Posterior vena cava (tissue), 2 donors: ENCODE measurements at regions of chrX and their contacts with region 1.

Region 1: DNA sequence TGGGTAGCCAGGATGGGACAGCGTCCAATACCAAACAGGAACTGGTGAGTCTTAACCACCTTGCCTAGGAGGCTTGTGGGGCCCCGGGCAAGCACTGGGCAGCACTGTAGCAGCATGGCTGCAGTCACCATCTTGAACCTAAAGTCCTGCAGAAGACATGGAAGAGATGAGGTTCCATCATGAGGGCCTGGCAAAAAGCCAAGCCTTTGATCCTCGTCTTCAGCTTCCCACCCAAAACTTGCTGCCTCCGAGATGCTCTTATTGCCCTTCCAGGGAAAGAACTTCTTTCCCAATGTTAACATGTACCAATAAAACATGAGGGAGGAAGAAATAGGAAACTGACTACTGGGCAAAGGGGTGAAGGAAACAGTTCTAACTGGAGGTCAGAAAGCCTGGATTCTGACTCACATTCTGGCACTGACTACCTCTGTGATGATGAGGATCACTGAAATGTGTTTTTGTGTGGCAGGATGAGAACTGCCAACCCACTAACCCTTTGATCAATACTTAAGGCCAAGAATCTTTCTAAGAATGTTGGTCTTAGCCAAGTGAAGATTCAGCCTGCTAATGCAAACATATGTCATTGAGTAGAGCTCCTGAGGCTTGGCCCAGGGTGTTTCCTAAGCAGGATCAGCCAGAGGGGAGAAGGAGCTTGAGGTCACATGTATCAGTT is 4.8 kb downstream of the ALAS2 start:
- DNase-seq: no peak

Region 2: GRCh38 chrX:53095796-53096195 is 1930.2 kb before region 1 on chrX:
- intact Hi-C with region 1: loop called in 1 of 2 experiments (anchors 5 kb)
- DNase-seq: no peak

Region 3: DNA sequence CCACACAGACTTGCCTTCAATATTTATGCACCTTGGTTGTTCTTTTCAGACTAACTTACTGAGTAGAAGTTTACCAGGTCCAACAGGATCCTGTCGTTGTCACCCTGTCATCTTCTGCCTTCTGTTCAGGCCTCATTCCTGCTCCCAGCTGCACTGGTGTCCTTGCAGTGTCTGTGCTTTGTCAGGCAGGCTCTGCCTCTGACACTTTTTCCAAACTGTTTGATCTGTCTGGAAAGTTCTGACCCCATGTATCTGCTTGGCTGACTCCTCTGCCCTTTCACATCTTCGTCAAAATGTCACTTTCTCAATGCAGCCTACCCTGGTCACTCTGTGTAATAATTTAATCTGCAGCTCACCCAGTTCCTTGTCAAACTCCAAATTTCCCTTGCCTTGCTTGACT is 72.7 kb after region 1 on chrX:
- intact Hi-C with region 1: no loop called
- DNase-seq: no peak